ENCODE measurements at regions of chr14 and their contacts with region 1.

Region 1: GRCh38 chr14:24332268-24332993 is 2.4 kb downstream of the ADCY4 start:
- DNase-seq: peak; percentile 93
- CTCF ChIP-seq: peak; percentile 73

Region 2: GRCh38 chr14:24160850-24161804 is 171.3 kb before region 1 on chr14 and contains the start of gene IRF9:
- in situ Hi-C with region 1: no loop called
- DNase-seq: peak; percentile 95
- CTCF ChIP-seq: peak; percentile 80

Region 3: DNA sequence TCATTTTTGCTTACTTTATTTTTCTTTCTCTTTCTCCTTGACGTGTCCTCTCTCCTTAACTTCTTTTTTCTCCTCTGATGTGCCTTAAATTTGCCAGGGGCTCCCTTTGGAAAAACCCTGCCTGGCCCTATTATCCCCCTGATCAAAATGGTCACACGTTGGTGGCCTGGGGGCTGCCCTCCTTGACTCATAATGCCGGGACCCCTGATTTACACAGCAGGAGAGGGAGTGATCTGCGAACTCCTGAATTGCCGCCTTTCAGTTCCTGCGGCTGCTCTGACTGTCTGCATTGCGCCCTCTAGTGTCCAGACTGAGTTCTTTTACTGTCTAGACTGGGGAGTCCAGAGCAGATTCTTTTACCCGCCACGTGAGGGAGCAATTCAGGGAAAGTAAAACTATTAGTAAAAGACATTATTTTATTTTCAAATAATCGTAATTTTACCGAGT is 346.4 kb after region 1 on chr14:
- in situ Hi-C with region 1: loop called (anchors 25 kb)
- DNase-seq: peak; percentile 75
- CTCF ChIP-seq: peak; percentile 98